ENCODE measurements at regions of chr18 and their contacts with region 1.

Region 1: GRCh38 chr18:26993568-26993967 is 128.1 kb upstream of the AQP4 start:
- DNase-seq: no peak
- ATAC-seq: no peak

Region 2: GRCh38 chr18:26813043-26813442 is 180.5 kb before region 1 on chr18:
- intact Hi-C with region 1: loop called (anchors 10 kb)
- DNase-seq: no peak
- ATAC-seq: no peak

Region 3: GRCh38 chr18:26919627-26920026 is 73.9 kb before region 1 on chr18:
- intact Hi-C with region 1: no loop called
- DNase-seq: no peak
- ATAC-seq: peak; percentile 23